PC-9 (cell line): ENCODE measurements at regions of chr10 and their contacts with region 1.

Region 1: DNA sequence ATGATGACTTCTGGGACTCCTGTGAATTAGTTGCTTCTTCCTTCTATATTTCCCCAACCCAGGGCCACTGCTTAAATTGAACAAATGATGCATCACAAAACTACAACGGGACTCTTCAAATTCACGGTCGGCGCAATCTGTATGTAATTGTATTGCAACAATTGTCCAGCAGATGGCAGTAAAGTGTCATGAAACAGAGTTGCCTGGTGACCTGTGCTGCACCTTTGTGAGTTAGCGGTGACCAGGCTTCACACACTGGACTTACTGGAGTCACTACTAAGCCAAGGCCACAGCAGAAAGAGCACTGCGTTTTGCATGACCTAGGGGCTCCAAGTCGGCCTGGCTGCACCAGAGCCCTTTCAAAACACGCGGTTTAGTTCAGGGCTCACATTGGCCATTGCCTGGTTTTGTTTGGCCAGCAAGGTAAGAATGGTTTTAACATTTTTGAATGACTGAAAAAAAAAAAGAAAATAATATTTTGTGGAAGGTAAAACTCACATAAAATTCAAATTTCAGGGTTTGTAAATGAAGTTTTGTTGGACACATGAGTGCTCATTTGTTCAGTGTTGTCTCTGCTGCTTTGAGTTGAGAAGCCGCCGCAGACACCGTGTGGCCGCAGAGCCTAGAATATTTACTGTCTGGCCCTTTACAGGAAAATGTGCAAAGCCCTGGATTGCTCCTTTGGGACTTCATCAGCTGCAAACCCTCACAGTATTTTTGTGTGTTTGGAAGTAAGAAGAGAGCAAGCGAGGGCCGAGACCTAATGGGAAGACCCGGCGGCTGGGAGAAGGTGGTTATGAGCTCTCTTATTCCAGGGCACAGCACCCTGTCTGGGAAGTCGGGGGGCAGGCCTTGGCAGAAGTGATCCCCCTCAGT is 23.2 kb upstream of the ZNF32 start:
- DNase-seq: peak; percentile 40 to 61
- H3K4me3 ChIP-seq: no peak overlapping the region
- H3K27ac ChIP-seq: no peak overlapping the region
- H3K4me1 ChIP-seq: no peaks in the 10 kb centered on the region
- H3K27me3 ChIP-seq: peaks cover 90% of the 10 kb centered on the region
- CTCF ChIP-seq: peak; percentile 93

Region 2: DNA sequence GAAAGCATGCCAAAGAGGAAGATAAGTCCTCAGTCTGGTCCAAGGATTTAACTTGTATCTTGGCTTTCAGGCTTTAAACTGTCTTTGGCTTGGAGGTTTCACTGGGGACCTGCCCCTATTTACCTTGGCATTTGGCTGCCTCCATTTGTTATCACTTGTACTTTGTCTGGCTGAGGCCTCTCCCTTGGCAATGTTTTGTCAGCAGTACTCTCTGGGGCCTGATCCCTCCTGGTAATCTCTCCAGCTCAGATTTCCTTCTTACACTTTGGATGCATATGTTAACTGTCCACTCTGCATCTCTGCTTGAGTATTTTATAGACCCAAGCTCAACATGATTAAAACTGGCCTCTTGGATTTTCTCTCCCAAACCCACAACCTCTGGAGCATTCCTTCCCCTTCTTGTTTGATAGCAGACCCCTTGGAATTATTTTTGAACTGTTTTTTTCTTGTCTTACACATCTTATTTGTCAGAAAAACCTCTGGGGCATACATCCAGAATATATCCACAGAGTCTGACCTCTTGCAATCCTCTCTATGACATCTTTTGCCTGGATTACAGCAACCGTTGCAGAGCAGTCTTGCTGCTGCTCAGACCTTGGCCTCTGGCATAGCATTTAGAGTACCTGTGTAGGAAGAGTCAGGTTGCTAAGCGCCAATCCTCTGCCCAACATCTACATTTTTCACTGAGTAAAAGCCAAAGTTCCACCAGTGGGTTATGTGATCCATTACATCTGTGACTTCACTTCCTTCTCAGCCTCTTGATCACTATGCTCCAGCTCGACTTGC is 199.8 kb before region 1 on chr10:
- CTCF ChIA-PET with region 1: no interaction called
- POLR2A ChIA-PET with region 1: no interaction called
- intact Hi-C with region 1: no loop called
- DNase-seq: no peak
- H3K4me3 ChIP-seq: no peak overlapping the region
- H3K27ac ChIP-seq: no peak overlapping the region
- H3K4me1 ChIP-seq: no peaks in the 10 kb centered on the region
- H3K27me3 ChIP-seq: no peaks in the 10 kb centered on the region
- CTCF ChIP-seq: no peak

Region 3: DNA sequence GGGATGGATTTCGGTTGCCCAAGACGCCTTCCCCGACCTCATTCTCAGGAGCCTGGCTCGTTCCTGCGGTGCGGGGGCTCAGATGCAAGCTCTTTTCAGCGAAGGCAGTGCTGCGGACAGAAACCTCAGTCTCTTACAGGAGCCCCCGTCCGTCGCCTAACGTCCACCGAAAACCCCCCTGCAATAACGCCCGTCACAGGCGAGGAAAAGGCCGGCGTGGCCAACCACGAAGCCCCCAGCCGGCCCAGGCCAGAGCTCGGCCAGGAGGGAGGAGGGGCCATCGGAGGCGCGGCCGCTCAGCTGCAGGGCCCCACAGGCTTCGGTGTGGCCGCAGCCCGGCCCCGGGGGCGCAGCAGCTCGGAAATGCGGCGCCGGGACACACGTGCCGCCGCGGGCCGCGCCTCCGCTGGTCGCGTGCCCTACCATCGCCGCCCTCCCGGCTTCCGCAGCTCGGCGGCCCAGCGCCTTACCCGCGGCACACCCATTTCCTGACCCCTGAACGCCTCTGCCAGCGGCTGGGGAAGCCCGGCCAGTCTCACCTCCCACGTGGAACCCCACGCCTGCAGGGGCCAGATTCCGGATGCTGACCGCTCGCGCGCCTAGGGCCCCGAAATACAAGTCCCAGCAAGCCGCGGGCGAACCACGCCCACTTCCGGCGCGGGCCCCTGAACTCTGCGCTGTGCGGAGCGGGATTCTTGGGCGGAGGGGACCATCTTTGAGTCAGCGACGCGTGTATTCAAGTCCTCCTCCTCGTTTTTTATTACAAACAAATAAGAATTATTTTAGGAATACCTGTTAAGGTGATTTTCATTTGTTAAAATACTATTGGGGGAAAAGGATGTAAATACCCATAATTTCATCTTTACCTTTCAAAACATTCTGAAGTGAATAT is 97.6 kb before region 1 on chr10 and contains the start of gene ZNF239:
- CTCF ChIA-PET with region 1: no interaction called
- POLR2A ChIA-PET with region 1: no interaction called
- intact Hi-C with region 1: no loop called
- DNase-seq: peak; percentile 67 to 80
- H3K4me3 ChIP-seq: peak within 1 kb of the TSS; percentile 75
- H3K27ac ChIP-seq: no peak within 1 kb of the TSS
- H3K4me1 ChIP-seq: peaks cover 12% of the 10 kb centered on the region; the same call in 1 of the 2 replicates
- H3K27me3 ChIP-seq: no peaks in the 10 kb centered on the region
- CTCF ChIP-seq: no peak
- total RNA-seq, gene ZNF239: 3.3 and 3.7 TPM in 2 replicates

Region 4: GRCh38 chr10:43731486-43731885 is 59.6 kb after region 1 on chr10:
- CTCF ChIA-PET with region 1: no interaction called
- POLR2A ChIA-PET with region 1: no interaction called
- intact Hi-C with region 1: no loop called
- DNase-seq: no peak
- H3K4me3 ChIP-seq: no peak overlapping the region
- H3K27ac ChIP-seq: no peak overlapping the region
- H3K4me1 ChIP-seq: no peaks in the 10 kb centered on the region
- H3K27me3 ChIP-seq: peaks cover 69% of the 10 kb centered on the region
- CTCF ChIP-seq: no peak

Region 5: GRCh38 chr10:44310762-44311562 is 639.1 kb after region 1 on chr10:
- CTCF ChIA-PET with region 1: no interaction called
- POLR2A ChIA-PET with region 1: no interaction called
- intact Hi-C with region 1: loop called (anchors 1 kb)
- DNase-seq: peak in 1 of 2 experiments; percentile 20
- H3K4me3 ChIP-seq: no peak overlapping the region
- H3K27ac ChIP-seq: no peak overlapping the region
- H3K4me1 ChIP-seq: no peaks in the 10 kb centered on the region
- H3K27me3 ChIP-seq: no peaks in the 10 kb centered on the region
- CTCF ChIP-seq: no peak

Region 6: DNA sequence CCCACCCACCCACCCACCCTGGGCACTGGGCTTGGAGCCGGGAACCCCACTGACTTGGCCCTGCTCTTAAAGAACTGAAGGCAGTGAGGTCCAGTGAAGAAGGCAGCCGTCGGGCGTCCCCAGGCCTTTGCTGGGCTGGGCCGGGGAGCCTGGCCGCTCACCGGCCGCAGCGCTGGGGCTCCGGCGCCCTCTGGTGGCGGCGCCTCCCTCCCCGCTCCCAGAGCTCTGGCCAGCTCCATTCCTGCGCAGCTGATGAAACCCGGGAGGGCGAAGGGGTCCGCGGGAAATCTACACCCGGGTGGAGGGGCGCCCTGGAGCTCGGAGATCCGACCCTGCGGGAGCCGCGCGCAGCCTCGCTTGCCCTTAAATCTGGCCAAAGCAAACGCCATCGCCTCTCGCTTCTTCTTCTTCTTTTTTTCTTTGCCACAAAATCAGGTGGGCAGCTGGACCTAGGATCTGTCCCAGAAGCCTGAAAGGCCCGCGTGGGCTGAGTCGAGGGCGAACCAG is 714.7 kb after region 1 on chr10:
- CTCF ChIA-PET with region 1: no interaction called
- POLR2A ChIA-PET with region 1: no interaction called
- intact Hi-C with region 1: loop called (anchors 1 kb)
- DNase-seq: peak in 1 of 2 experiments; percentile 42
- H3K4me3 ChIP-seq: no peak overlapping the region
- H3K27ac ChIP-seq: no peak overlapping the region
- H3K4me1 ChIP-seq: no peaks in the 10 kb centered on the region
- H3K27me3 ChIP-seq: peaks cover 21% of the 10 kb centered on the region; the same call in 1 of the 2 replicates
- CTCF ChIP-seq: peak; percentile 78

Region 7: DNA sequence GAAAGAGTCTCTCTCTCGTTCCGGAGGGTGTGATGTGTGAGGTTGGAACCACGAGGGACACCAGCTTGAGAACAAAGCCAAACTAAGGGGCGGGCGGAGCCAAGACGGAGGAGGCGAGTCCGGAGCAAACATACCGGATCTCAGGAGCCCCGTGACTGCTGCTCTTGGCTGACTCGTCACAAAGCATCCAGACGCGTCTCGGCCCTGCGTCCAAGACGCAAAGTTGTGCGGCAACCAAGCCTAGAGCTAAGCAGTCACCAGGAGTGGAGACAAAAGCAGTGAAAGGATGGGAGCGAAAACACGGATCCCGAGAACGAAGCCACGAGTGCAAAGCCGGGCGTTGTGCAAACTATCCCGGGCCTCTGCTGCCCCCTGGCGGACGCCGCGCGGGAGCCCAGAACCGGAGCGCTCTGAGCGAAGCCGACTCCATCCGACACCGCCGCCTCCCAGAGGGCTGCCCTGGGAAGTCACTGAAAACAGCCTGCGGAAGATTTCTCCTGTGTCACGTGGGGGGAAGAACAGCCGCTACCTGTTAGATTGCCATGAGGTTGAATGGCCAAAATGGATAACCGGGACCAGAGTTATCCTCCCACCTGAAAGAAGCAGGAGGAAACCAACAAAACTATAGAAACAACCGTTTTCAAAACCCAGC is 1192.9 kb after region 1 on chr10:
- CTCF ChIA-PET with region 1: no interaction called
- POLR2A ChIA-PET with region 1: no interaction called
- intact Hi-C with region 1: loop called (anchors 1 kb)
- DNase-seq: peak in 1 of 2 experiments; percentile 80
- H3K4me3 ChIP-seq: no peak overlapping the region
- H3K27ac ChIP-seq: no peak overlapping the region
- H3K4me1 ChIP-seq: no peaks in the 10 kb centered on the region
- H3K27me3 ChIP-seq: peaks cover 45% of the 10 kb centered on the region
- CTCF ChIP-seq: peak; percentile 94